BJ (cell line): ENCODE measurements at regions of chr19 and their contacts with region 1.

Region 1: GRCh38 chr19:12983542-12984142 is 11.6 kb upstream of the NFIX start:
- DNase-seq: no peak
- H3K4me3 ChIP-seq: peak overlapping the region; percentile 39
- H3K27me3 ChIP-seq: no peaks in the 10 kb centered on the region
- CTCF ChIP-seq: peak; percentile 71

Region 2: GRCh38 chr19:13104360-13104847 is 120.8 kb after region 1 on chr19:
- CTCF ChIA-PET with region 1: interaction called, 25 read pairs
- POLR2A ChIA-PET with region 1: no interaction called
- DNase-seq: no peak
- H3K4me3 ChIP-seq: no peak overlapping the region
- H3K27me3 ChIP-seq: no peaks in the 10 kb centered on the region
- CTCF ChIP-seq: peak; percentile 74

Region 3: GRCh38 chr19:13262450-13262849 is 278.8 kb after region 1 on chr19:
- CTCF ChIA-PET with region 1: interaction called, 60 read pairs
- POLR2A ChIA-PET with region 1: no interaction called
- DNase-seq: peak; percentile 6
- H3K4me3 ChIP-seq: no peak overlapping the region
- H3K27me3 ChIP-seq: no peaks in the 10 kb centered on the region
- CTCF ChIP-seq: peak; percentile 52